ENCODE measurements at regions of chr7 and their contacts with region 1.

Region 1: GRCh38 chr7:74417419-74417971 is 36.2 kb upstream of the GTF2IRD1 start:
- DNase-seq: peak; percentile 30 to 74 (median 42)
- ATAC-seq: peak; percentile 73
- H3K4me3 ChIP-seq: no peak overlapping the region
- H3K4me3 Mint-ChIP-seq: no peak overlapping the region
- H3K27ac ChIP-seq: no peak overlapping the region
- H3K27ac Mint-ChIP-seq: no peak overlapping the region
- H3K4me1 ChIP-seq: peaks cover 5% of the 10 kb centered on the region
- H3K4me1 Mint-ChIP-seq: no peaks in the 10 kb centered on the region
- H3K27me3 ChIP-seq: no peaks in the 10 kb centered on the region
- H3K27me3 Mint-ChIP-seq: no peaks in the 10 kb centered on the region
- CTCF ChIP-seq: peak; percentile 98

Region 2: GRCh38 chr7:74449809-74450397 is 32.4 kb after region 1 on chr7:
- CTCF ChIA-PET with region 1: no interaction called
- POLR2A ChIA-PET with region 1: no interaction called
- intact Hi-C with region 1: loop called in 1 of 2 experiments (anchors 2 kb)
- DNase-seq: peak; percentile 47 to 86 (median 61)
- ATAC-seq: peak; percentile 12
- H3K4me3 ChIP-seq: no peak overlapping the region
- H3K4me3 Mint-ChIP-seq: peak overlapping the region; percentile 49
- H3K27ac ChIP-seq: no peak overlapping the region
- H3K27ac Mint-ChIP-seq: peak overlapping the region; percentile 73
- H3K4me1 ChIP-seq: peaks cover 38% of the 10 kb centered on the region
- H3K4me1 Mint-ChIP-seq: peaks cover 17% of the 10 kb centered on the region
- H3K27me3 ChIP-seq: no peaks in the 10 kb centered on the region
- H3K27me3 Mint-ChIP-seq: no peaks in the 10 kb centered on the region
- CTCF ChIP-seq: peak; percentile 77

Region 3: GRCh38 chr7:74514131-74514591 is 96.7 kb after region 1 on chr7:
- CTCF ChIA-PET with region 1: no interaction called
- POLR2A ChIA-PET with region 1: no interaction called
- intact Hi-C with region 1: no loop called
- DNase-seq: no peak
- ATAC-seq: no peak
- H3K4me3 ChIP-seq: no peak overlapping the region
- H3K4me3 Mint-ChIP-seq: no peak overlapping the region
- H3K27ac ChIP-seq: no peak overlapping the region
- H3K27ac Mint-ChIP-seq: no peak overlapping the region
- H3K4me1 ChIP-seq: no peaks in the 10 kb centered on the region
- H3K4me1 Mint-ChIP-seq: no peaks in the 10 kb centered on the region
- H3K27me3 ChIP-seq: no peaks in the 10 kb centered on the region
- H3K27me3 Mint-ChIP-seq: no peaks in the 10 kb centered on the region
- CTCF ChIP-seq: no peak

Region 4: GRCh38 chr7:74544706-74545469 is 127.4 kb after region 1 on chr7:
- CTCF ChIA-PET with region 1: no interaction called
- POLR2A ChIA-PET with region 1: no interaction called
- intact Hi-C with region 1: loop called in 1 of 2 experiments (anchors 5 kb)
- DNase-seq: peak in 6 of 14 experiments; percentile 2 to 49 (median 18)
- ATAC-seq: no peak
- H3K4me3 ChIP-seq: no peak overlapping the region
- H3K4me3 Mint-ChIP-seq: no peak overlapping the region
- H3K27ac ChIP-seq: no peak overlapping the region
- H3K27ac Mint-ChIP-seq: no peak overlapping the region
- H3K4me1 ChIP-seq: no peaks in the 10 kb centered on the region
- H3K4me1 Mint-ChIP-seq: no peaks in the 10 kb centered on the region
- H3K27me3 ChIP-seq: no peaks in the 10 kb centered on the region
- H3K27me3 Mint-ChIP-seq: no peaks in the 10 kb centered on the region
- CTCF ChIP-seq: peak; percentile 33

Region 5: DNA sequence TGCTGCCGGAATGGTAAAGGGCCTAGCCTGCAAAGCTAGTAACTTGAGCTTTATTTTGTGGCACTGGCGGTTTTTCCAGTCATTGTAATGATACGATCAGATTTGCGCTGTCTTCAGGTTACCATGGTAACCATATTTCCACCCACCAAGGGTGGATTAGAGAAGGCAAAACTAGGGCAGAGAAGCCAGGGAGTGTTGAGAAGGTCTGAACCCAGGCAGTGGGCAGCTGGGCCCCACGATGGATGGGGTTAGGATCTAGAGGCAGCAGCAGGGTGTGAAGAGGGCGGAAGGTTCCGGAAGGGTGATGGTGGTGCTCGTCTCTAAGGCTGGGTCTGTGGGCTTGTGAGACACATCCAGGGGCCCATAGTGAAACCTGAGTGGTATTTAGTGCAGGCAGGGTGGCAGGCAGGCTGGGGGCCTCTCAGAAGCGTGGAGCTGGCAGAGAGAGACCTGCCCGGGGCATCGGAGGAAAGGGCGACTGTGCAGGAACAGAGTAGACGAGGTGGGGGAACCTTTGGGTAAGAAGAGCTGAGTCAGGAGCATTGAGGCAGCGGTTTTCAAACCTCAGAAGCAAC is 152.1 kb after region 1 on chr7:
- CTCF ChIA-PET with region 1: interaction called, 11 read pairs
- POLR2A ChIA-PET with region 1: no interaction called
- intact Hi-C with region 1: loop called (anchors 1 kb)
- DNase-seq: peak in 7 of 14 experiments; percentile 1 to 62 (median 25)
- ATAC-seq: peak; percentile 52
- H3K4me3 ChIP-seq: no peak overlapping the region
- H3K4me3 Mint-ChIP-seq: no peak overlapping the region
- H3K27ac ChIP-seq: peak overlapping the region in 1 of 2 donors; percentile 55
- H3K27ac Mint-ChIP-seq: peak overlapping the region; percentile 60
- H3K4me1 ChIP-seq: peaks cover 22% of the 10 kb centered on the region
- H3K4me1 Mint-ChIP-seq: peaks cover 13% of the 10 kb centered on the region
- H3K27me3 ChIP-seq: no peaks in the 10 kb centered on the region
- H3K27me3 Mint-ChIP-seq: no peaks in the 10 kb centered on the region
- CTCF ChIP-seq: no peak

Region 6: DNA sequence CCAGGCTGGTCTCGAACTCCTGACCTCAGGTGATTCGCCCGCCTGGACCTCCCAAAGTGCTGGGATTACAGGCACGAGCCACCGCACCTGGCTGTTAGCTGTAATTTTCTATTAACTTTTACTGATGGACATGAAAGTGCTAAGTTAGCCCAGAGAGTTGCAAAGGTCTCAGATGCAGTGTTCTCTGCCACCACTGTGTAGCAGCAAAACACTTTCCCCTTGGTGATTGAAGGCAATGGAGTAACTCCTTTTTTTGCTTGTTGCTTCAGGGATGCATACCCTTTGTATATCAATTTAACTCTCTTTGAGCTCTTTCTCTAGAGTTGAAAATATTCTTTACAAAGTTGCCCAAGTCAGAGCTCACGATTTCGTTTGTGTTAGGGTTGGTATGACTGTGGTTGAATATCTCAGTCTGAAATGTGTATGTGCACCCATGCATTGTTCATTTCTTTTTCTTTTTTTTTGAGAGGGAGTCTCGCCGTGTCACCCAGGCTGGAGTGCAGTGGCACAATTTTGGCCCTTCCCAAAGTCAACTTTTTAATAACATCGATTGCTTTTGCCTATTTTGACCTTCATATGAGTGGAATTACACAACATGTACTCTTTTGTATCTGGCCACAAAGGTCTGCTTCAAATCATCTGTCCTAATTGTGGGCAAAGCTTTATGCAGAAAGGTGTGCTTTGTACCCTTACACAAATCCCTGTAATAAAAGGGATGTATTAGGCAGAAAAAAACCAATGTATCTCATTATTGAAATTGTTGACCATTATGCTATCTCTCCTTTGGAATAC is 292.6 kb after region 1 on chr7:
- CTCF ChIA-PET with region 1: no interaction called
- POLR2A ChIA-PET with region 1: no interaction called
- intact Hi-C with region 1: loop called in 1 of 2 experiments (anchors 10 kb)
- DNase-seq: peak in 1 of 14 experiments; percentile 10
- ATAC-seq: no peak
- H3K4me3 ChIP-seq: no peak overlapping the region
- H3K4me3 Mint-ChIP-seq: no peak overlapping the region
- H3K27ac ChIP-seq: no peak overlapping the region
- H3K27ac Mint-ChIP-seq: no peak overlapping the region
- H3K4me1 ChIP-seq: no peaks in the 10 kb centered on the region
- H3K4me1 Mint-ChIP-seq: no peaks in the 10 kb centered on the region
- H3K27me3 ChIP-seq: no peaks in the 10 kb centered on the region
- H3K27me3 Mint-ChIP-seq: no peaks in the 10 kb centered on the region
- CTCF ChIP-seq: no peak

Region 7: DNA sequence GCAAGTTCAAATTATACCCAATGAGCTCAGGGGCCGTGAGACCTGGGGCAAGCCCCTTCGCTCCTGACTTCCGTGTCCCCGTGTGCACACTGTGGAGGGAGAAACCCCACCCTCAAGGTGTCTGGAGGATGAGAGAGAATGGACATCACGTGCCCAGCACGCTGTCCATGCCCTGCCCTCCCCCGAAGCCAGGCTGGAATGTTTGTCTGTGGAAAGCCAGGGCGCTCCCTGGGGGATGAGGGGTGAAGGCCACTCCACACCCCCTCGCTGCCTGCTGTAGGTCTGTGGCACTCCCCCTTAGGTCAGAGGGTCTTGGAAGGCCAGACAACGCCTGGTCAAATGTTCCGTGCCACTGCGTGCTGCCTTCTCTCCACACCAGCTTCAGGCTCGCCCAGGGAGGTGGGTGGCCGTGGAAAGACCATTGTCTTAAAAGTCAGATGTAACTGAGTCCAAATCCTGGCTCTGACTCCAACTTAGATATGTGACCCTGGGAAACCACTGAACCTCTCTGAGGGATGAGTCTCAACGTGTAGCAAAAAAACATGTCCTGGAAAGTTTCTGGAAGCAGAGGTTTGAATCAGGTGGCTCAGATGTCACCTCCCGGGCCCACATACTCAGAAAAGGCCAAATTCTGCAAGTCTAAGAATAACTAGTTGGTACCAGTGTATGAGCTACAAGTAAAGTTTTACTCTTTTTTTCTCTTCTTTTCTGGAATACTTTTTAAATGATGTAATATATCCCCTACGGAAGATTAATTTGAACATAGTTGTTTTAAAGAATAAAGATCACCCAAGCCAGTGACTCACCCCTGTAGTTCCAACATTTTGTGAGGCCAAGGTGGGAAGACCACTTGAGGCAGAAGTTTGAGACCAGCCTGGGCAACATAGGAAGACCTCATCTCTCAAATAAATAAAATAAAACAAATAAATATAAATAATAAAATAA is 631.2 kb after region 1 on chr7:
- CTCF ChIA-PET with region 1: interaction called, 3 read pairs
- POLR2A ChIA-PET with region 1: no interaction called
- intact Hi-C with region 1: loop called (anchors 2 to 5 kb)
- DNase-seq: no peak
- ATAC-seq: no peak
- H3K4me3 ChIP-seq: no peak overlapping the region
- H3K4me3 Mint-ChIP-seq: no peak overlapping the region
- H3K27ac ChIP-seq: no peak overlapping the region
- H3K27ac Mint-ChIP-seq: no peak overlapping the region
- H3K4me1 ChIP-seq: no peaks in the 10 kb centered on the region
- H3K4me1 Mint-ChIP-seq: no peaks in the 10 kb centered on the region
- H3K27me3 ChIP-seq: no peaks in the 10 kb centered on the region
- H3K27me3 Mint-ChIP-seq: no peaks in the 10 kb centered on the region
- CTCF ChIP-seq: no peak

Measured in CD4-positive, alpha-beta T cell (primary cell).